ENCODE measurements at regions of chrX and their contacts with region 1.

Region 1: GRCh38 chrX:20066968-20067708 is 49.6 kb downstream of the MAP7D2 start:
- DNase-seq: peak in 7 of 14 experiments; percentile 0 to 59 (median 23)
- ATAC-seq: peak; percentile 64
- H3K4me3 ChIP-seq: no peak overlapping the region
- H3K4me3 Mint-ChIP-seq: no peak overlapping the region
- H3K27ac ChIP-seq: no peak overlapping the region
- H3K27ac Mint-ChIP-seq: no peak overlapping the region
- H3K4me1 ChIP-seq: no peaks in the 10 kb centered on the region
- H3K4me1 Mint-ChIP-seq: no peaks in the 10 kb centered on the region
- H3K27me3 ChIP-seq: no peaks in the 10 kb centered on the region
- H3K27me3 Mint-ChIP-seq: no peaks in the 10 kb centered on the region
- CTCF ChIP-seq: no peak

Region 2: DNA sequence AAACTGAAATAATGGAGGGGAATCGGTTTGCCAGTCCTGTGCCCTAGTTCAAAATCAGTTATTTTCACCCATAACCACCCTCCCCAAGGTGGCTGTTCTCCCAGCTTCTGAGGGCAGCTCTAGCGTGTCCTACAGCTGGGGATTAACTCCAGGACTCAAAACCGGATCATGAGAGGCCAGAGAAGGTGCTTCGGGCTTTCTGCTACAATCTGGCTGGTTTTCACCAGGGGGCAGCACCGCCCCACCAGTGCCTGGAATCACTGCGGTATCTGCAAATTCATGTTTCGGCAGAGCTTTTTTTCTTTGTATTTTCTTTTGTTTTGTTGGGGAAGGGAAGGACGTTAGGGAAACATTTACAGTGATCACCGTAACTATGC is 695.0 kb before region 1 on chrX:
- CTCF ChIA-PET with region 1: interaction called, 3 read pairs
- POLR2A ChIA-PET with region 1: no interaction called
- intact Hi-C with region 1: loop called (anchors 1 to 5 kb)
- DNase-seq: peak; percentile 33 to 77 (median 56)
- ATAC-seq: peak; percentile 76
- H3K4me3 ChIP-seq: peak overlapping the region; percentile 59
- H3K4me3 Mint-ChIP-seq: peak overlapping the region; percentile 80
- H3K27ac ChIP-seq: no peak overlapping the region
- H3K27ac Mint-ChIP-seq: no peak overlapping the region
- H3K4me1 ChIP-seq: peaks cover 11% of the 10 kb centered on the region
- H3K4me1 Mint-ChIP-seq: peaks cover 9% of the 10 kb centered on the region
- H3K27me3 ChIP-seq: no peaks in the 10 kb centered on the region
- H3K27me3 Mint-ChIP-seq: no peaks in the 10 kb centered on the region
- CTCF ChIP-seq: peak; percentile 67

Region 3: GRCh38 chrX:19593690-19594089 is 473.4 kb before region 1 on chrX:
- CTCF ChIA-PET with region 1: no interaction called
- POLR2A ChIA-PET with region 1: no interaction called
- intact Hi-C with region 1: loop called in 1 of 2 experiments (anchors 1 kb)
- DNase-seq: peak in 6 of 14 experiments; percentile 3 to 62 (median 44)
- ATAC-seq: peak; percentile 44
- H3K4me3 ChIP-seq: no peak overlapping the region
- H3K4me3 Mint-ChIP-seq: no peak overlapping the region
- H3K27ac ChIP-seq: no peak overlapping the region
- H3K27ac Mint-ChIP-seq: no peak overlapping the region
- H3K4me1 ChIP-seq: no peaks in the 10 kb centered on the region
- H3K4me1 Mint-ChIP-seq: peaks cover 10% of the 10 kb centered on the region
- H3K27me3 ChIP-seq: no peaks in the 10 kb centered on the region
- H3K27me3 Mint-ChIP-seq: no peaks in the 10 kb centered on the region
- CTCF ChIP-seq: peak; percentile 54

Region 4: GRCh38 chrX:19739683-19740082 is 327.5 kb before region 1 on chrX:
- CTCF ChIA-PET with region 1: no interaction called
- POLR2A ChIA-PET with region 1: no interaction called
- intact Hi-C with region 1: loop called in 1 of 2 experiments (anchors 10 kb)
- DNase-seq: peak in 12 of 14 experiments; percentile 9 to 75 (median 33)
- ATAC-seq: peak; percentile 31
- H3K4me3 ChIP-seq: no peak overlapping the region
- H3K4me3 Mint-ChIP-seq: peak overlapping the region; percentile 56
- H3K27ac ChIP-seq: no peak overlapping the region
- H3K27ac Mint-ChIP-seq: peak overlapping the region; percentile 74
- H3K4me1 ChIP-seq: peaks cover 64% of the 10 kb centered on the region
- H3K4me1 Mint-ChIP-seq: peaks cover 79% of the 10 kb centered on the region
- H3K27me3 ChIP-seq: no peaks in the 10 kb centered on the region
- H3K27me3 Mint-ChIP-seq: no peaks in the 10 kb centered on the region
- CTCF ChIP-seq: peak; percentile 53

Region 5: DNA sequence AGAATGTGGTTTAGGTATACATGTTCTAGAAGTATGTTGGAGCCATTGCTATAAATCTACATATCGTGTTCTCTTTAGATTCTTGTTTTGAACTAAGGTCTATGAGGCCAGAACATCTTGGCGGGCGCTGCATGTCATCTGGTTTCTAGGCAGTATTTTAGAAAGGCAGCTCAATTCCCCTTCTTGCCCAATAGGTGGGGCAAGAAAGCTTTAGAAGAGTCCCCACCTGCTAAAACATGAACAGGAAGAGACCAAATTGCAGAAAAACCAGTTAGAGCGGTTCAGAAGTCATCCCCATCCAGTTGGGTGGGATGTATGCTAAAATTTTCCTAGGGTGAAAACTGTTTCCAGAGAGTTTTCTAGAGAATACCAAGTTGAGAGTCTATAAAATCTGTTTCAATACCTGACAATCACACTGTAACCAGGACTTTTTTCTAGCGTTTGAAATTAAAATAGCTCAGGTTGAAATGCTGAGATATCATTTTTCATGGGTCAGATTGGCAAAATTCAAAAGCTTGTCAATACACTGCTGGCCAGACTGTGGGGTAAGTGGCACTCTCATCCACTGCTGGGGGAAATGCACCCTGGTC is 162.3 kb before region 1 on chrX:
- CTCF ChIA-PET with region 1: interaction called, 5 read pairs
- POLR2A ChIA-PET with region 1: no interaction called
- intact Hi-C with region 1: loop called in 1 of 2 experiments (anchors 1 kb)
- DNase-seq: peak in 4 of 14 experiments; percentile 35 to 69 (median 62)
- ATAC-seq: peak; percentile 73
- H3K4me3 ChIP-seq: no peak overlapping the region
- H3K4me3 Mint-ChIP-seq: no peak overlapping the region
- H3K27ac ChIP-seq: no peak overlapping the region
- H3K27ac Mint-ChIP-seq: no peak overlapping the region
- H3K4me1 ChIP-seq: no peaks in the 10 kb centered on the region
- H3K4me1 Mint-ChIP-seq: peaks cover 11% of the 10 kb centered on the region
- H3K27me3 ChIP-seq: no peaks in the 10 kb centered on the region
- H3K27me3 Mint-ChIP-seq: no peaks in the 10 kb centered on the region
- CTCF ChIP-seq: peak; percentile 66

Measured in CD4-positive, alpha-beta T cell (primary cell).